ENCODE measurements at regions of chr16 and their contacts with region 1.

Region 1: GRCh38 chr16:89922884-89923690 is at the start of gene TUBB3:
- DNase-seq: peak; percentile 73
- ATAC-seq: peak; percentile 18
- H3K4me3 ChIP-seq: peak within 1 kb of the TSS; percentile 74 to 90 (median 81)
- H3K27ac ChIP-seq: peak within 1 kb of the TSS; percentile 88
- H3K4me1 ChIP-seq: peaks cover 52% of the 10 kb centered on the region
- H3K27me3 ChIP-seq: no peaks in the 10 kb centered on the region; a peak in 1 of 5 replicates
- CTCF ChIP-seq: peak; percentile 37
- EP300 ChIP-seq: peak in 1 of 2 experiments; percentile 29; a peak in 1 of 4 replicates
- POLR2A ChIP-seq: peak in 1 of 2 experiments; percentile 90; a peak in 2 of 4 replicates
- RAD21 ChIP-seq: peak; percentile 64
- total RNA-seq, gene TUBB3: 161 and 185 TPM in 2 replicates

Region 2: GRCh38 chr16:89909777-89910716 is 13.0 kb before region 1 on chr16:
- CTCF ChIA-PET with region 1: interaction called, 4 read pairs
- POLR2A ChIA-PET with region 1: interaction called, 78 read pairs
- in situ Hi-C with region 1: no loop called
- intact Hi-C with region 1: no loop called
- DNase-seq: peak; percentile 60
- ATAC-seq: peak; percentile 82
- H3K4me3 ChIP-seq: no peak overlapping the region
- H3K27ac ChIP-seq: no peak overlapping the region
- H3K4me1 ChIP-seq: peaks cover 17% of the 10 kb centered on the region
- H3K27me3 ChIP-seq: no peaks in the 10 kb centered on the region
- CTCF ChIP-seq: peak; percentile 95
- EP300 ChIP-seq: no peak
- POLR2A ChIP-seq: no peak
- RAD21 ChIP-seq: peak; percentile 54

Region 3: GRCh38 chr16:89945670-89946069 is 22.6 kb after region 1 on chr16:
- CTCF ChIA-PET with region 1: no interaction called
- POLR2A ChIA-PET with region 1: interaction called, 86 read pairs
- in situ Hi-C with region 1: no loop called
- intact Hi-C with region 1: no loop called
- DNase-seq: no peak
- ATAC-seq: no peak
- H3K4me3 ChIP-seq: no peak overlapping the region
- H3K27ac ChIP-seq: no peak overlapping the region
- H3K4me1 ChIP-seq: peaks cover 32% of the 10 kb centered on the region
- H3K27me3 ChIP-seq: peaks cover 0 to 34% of the 10 kb centered on the region in 2 experiments; a peak in 4 of 5 replicates
- CTCF ChIP-seq: peak; percentile 46
- EP300 ChIP-seq: no peak
- POLR2A ChIP-seq: no peak
- RAD21 ChIP-seq: no peak

Region 4: DNA sequence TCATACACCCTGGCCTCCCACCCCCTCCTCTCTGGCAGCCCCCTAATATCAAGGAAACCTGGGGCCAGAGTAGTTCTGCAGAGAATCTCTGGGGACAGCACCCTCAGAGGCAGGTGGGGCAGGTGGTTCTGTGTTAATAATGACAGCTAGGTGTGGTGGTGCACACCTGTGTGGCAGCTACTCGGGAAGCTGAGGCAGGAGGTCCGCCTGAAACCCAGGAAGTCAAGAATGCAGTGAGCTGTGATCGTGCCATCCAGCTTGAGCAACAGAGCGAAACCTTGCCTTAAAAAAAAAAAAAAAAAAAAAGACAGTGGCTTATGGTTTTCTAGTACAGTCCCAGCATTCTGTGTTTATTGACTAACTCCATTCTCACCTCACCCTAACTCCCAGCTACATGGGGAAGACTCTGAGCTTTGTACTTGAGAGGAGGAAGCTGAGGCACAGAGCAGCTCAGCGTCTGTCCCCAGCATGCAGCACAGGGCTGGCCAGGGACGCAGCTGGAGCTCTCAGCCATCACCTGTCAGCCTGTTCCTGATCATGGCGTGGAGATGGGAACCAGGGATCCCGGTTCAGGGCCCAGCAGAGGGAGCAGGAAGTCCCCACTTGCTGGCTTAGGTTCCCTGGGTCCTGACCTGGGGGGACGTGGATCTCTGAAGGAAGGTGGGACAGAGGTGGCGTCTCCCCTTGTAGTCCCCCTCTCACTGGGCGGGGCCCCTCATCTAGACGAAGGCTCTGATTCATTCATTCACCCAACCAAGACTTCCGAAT is 90.1 kb after region 1 on chr16:
- CTCF ChIA-PET with region 1: no interaction called
- POLR2A ChIA-PET with region 1: interaction called, 13 read pairs
- in situ Hi-C with region 1: no loop called
- intact Hi-C with region 1: no loop called
- DNase-seq: no peak
- ATAC-seq: no peak
- H3K4me3 ChIP-seq: no peak overlapping the region
- H3K27ac ChIP-seq: no peak overlapping the region
- H3K4me1 ChIP-seq: peaks cover 37% of the 10 kb centered on the region
- H3K27me3 ChIP-seq: no peaks in the 10 kb centered on the region
- CTCF ChIP-seq: no peak
- EP300 ChIP-seq: no peak
- POLR2A ChIP-seq: no peak
- RAD21 ChIP-seq: no peak

Region 5: GRCh38 chr16:90031931-90032687 is 109.0 kb after region 1 on chr16:
- CTCF ChIA-PET with region 1: no interaction called
- POLR2A ChIA-PET with region 1: no interaction called
- in situ Hi-C with region 1: no loop called
- intact Hi-C with region 1: no loop called
- DNase-seq: no peak
- ATAC-seq: no peak
- H3K4me3 ChIP-seq: no peak overlapping the region
- H3K27ac ChIP-seq: no peak overlapping the region
- H3K4me1 ChIP-seq: no peaks in the 10 kb centered on the region
- H3K27me3 ChIP-seq: no peaks in the 10 kb centered on the region
- CTCF ChIP-seq: no peak
- EP300 ChIP-seq: no peak
- POLR2A ChIP-seq: no peak
- RAD21 ChIP-seq: no peak

Measured in HepG2 (cell line).